Esophagus muscularis mucosa (tissue), 4 donors: ENCODE measurements at regions of chr6 and their contacts with region 1.

Region 1: DNA sequence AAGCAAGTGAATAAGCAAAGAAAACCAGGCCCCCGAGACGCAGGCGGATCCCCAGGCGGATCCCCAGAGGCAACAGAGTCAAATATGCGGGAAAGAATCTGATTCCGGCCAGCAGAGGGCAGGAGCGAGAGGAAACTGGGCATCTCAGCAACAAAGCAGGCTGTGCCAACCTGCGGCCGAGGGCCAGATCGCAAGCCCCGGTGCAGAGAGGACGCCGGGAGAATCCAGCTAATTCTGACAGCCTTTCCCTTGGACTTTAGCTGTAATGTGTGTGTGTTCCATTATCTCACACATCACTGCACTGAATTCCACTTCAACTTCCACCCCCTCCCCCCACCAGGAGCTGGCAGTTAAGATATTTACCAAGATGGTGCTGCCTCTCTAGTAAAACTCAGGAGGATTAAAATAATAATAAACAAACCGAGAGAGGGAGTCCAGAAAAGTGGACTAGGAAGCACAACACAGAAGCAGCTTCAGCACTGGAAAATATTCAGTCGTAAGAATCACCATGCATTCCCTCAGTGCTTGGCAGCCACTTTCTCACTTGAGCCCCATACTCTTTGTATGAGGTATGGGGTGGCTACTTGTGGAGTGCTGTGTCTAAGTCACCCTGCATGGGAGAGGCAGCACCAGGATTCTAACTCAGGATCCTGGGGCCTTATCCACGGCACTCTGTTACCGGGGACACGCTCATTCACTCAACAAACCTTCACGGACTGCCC is 66.2 kb upstream of the SNX9 start:
- DNase-seq: peak; percentile 98
- H3K4me3 ChIP-seq: peak overlapping the region in 3 of 4 donors; percentile 21 to 34 (median 24)
- H3K27ac ChIP-seq: peak overlapping the region in 1 of 4 donors; percentile 65
- H3K4me1 ChIP-seq: peaks cover 18 to 25% (median 20%) of the 10 kb centered on the region in 4 donors
- H3K27me3 ChIP-seq: no peaks in the 10 kb centered on the region
- CTCF ChIP-seq: peak; percentile 83 to 87 (median 83)
- EP300 ChIP-seq: no peak
- POLR2A ChIP-seq: no peak

Region 2: GRCh38 chr6:157873735-157874344 is 117.0 kb after region 1 on chr6:
- intact Hi-C with region 1: loop called (anchors 2 kb)
- DNase-seq: no peak
- H3K4me3 ChIP-seq: no peak overlapping the region
- H3K27ac ChIP-seq: no peak overlapping the region
- H3K4me1 ChIP-seq: peaks cover 0 to 8% (median 6%) of the 10 kb centered on the region in 4 donors
- H3K27me3 ChIP-seq: no peaks in the 10 kb centered on the region
- CTCF ChIP-seq: peak; percentile 74 to 80 (median 79)
- EP300 ChIP-seq: no peak
- POLR2A ChIP-seq: no peak

Region 3: GRCh38 chr6:158009114-158009891 is 252.4 kb after region 1 on chr6:
- intact Hi-C with region 1: no loop called
- DNase-seq: no peak
- H3K4me3 ChIP-seq: peak overlapping the region in 1 of 4 donors; percentile 12
- H3K27ac ChIP-seq: peak overlapping the region; percentile 38 to 63 (median 42)
- H3K4me1 ChIP-seq: peaks cover 31 to 58% (median 43%) of the 10 kb centered on the region in 4 donors
- H3K27me3 ChIP-seq: no peaks in the 10 kb centered on the region
- CTCF ChIP-seq: no peak
- EP300 ChIP-seq: no peak
- POLR2A ChIP-seq: no peak

Region 4: DNA sequence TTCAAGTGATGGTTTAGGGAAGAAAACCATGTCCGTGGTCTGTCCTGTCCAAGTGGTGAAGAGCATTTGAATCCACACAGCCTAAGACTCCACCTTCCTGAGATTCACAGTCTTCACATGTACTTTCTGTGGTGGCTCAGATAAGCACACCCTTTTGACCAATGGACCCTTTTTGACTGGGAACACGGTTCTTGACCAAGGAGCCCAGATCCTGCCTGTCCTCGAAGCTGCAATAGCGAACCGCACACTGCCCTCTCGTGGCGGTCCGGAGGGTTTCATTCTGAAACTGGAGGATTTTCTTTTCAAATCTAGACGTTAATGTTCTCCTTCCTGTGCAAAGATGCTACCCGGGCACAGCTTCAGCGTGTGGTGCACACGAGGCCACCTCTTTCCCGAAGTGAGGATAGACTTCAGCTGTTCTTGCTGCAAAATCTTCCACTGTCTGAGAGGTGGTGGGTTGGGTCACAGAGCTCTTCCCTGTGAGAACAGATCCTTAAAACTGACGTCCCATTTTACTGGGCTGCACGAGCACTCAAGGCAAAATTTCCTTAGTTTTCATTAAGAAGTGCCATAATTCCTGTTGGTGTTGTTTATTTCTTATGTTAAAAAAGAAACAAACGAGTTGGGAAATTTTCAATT is 315.3 kb after region 1 on chr6:
- intact Hi-C with region 1: loop called (anchors 5 kb)
- DNase-seq: no peak
- H3K4me3 ChIP-seq: no peak overlapping the region
- H3K27ac ChIP-seq: peak overlapping the region in 1 of 4 donors; percentile 27
- H3K4me1 ChIP-seq: peaks cover 4 to 30% (median 13%) of the 10 kb centered on the region in 4 donors
- H3K27me3 ChIP-seq: no peaks in the 10 kb centered on the region
- CTCF ChIP-seq: peak; percentile 78 to 87 (median 83)
- EP300 ChIP-seq: no peak
- POLR2A ChIP-seq: no peak